A673 (cell line): ENCODE measurements at regions of chr3 and their contacts with region 1.

Region 1: DNA sequence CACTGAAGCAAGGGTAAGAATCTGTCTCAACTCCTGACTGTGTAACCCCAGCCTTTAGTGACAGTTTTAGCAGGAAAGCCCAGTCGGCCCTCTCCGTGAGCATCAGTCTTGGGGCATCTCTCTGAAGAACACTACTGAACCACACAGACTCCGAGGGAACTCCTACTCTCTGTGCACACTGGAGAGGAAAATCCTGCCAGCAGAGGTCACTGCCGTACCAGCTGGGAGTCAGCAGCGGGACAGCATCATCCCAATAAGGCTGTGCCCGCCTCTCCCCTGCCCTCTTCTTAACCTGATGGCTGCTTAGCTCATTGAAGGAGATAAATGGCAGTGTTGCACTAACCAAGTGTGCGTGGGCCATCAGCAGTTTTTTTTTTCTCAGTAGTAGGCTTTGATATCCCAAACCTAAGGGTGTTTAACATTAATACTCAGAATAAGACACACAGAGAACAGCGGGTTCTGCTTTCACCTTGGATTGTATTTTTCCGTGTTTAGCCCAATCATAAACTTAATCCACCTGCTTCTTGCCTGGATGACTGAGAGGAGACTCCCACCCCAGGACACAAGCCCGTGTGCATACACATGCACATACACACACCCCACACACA is 26.6 kb upstream of the RASA2 start:
- DNase-seq: peak; percentile 89
- H3K4me3 ChIP-seq: no peak overlapping the region
- H3K27ac ChIP-seq: no peak overlapping the region
- H3K4me1 ChIP-seq: no peaks in the 10 kb centered on the region
- H3K27me3 ChIP-seq: no peaks in the 10 kb centered on the region
- CTCF ChIP-seq: peak; percentile 85

Region 2: GRCh38 chr3:141644931-141645330 is 184.7 kb after region 1 on chr3:
- CTCF ChIA-PET with region 1: interaction called, 6 read pairs
- POLR2A ChIA-PET with region 1: no interaction called
- intact Hi-C with region 1: loop called (anchors 2 kb)
- DNase-seq: peak; percentile 63
- H3K4me3 ChIP-seq: no peak overlapping the region
- H3K27ac ChIP-seq: no peak overlapping the region
- H3K4me1 ChIP-seq: peaks cover 3% of the 10 kb centered on the region
- H3K27me3 ChIP-seq: no peaks in the 10 kb centered on the region
- CTCF ChIP-seq: peak; percentile 89

Region 3: DNA sequence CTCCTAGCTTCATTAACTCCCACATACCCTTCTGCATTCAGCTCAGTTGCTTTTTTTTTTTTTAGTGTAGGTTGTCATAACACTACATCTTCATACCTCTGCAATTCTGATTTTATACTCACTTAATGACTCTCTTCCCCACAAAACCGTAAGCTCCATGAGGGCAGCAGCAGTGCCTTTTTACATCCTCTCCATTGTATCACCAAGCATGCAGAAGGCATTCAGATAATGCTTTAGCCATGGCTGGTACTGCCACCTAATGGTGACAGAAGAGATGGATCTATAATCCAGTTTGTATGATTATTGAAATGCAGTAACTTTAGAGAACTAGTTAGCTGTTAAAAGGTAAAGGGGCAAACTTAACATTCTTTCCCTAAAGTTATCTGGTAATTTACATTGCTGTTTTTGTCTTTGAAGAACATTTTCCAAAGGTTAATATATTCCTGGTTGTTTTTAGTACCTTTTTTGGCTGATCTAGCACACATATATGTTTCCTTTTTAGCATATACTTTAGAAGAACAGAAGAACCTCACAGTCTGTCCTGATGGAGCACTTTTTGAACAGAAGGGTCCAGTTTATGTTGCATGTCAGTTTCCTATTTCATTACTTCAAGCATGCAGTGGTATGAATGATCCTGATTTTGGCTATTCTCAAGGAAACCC is 453.1 kb after region 1 on chr3:
- CTCF ChIA-PET with region 1: interaction called, 3 read pairs
- POLR2A ChIA-PET with region 1: no interaction called
- intact Hi-C with region 1: loop called (anchors 10 kb)
- DNase-seq: peak; percentile 78
- H3K4me3 ChIP-seq: no peak overlapping the region
- H3K27ac ChIP-seq: no peak overlapping the region
- H3K4me1 ChIP-seq: peaks cover 27% of the 10 kb centered on the region
- H3K27me3 ChIP-seq: no peaks in the 10 kb centered on the region
- CTCF ChIP-seq: peak; percentile 81

Region 4: GRCh38 chr3:142578327-142579223 is 1118.4 kb after region 1 on chr3 and contains the start of gene ATR:
- CTCF ChIA-PET with region 1: no interaction called
- POLR2A ChIA-PET with region 1: no interaction called
- intact Hi-C with region 1: no loop called
- DNase-seq: peak; percentile 98
- H3K4me3 ChIP-seq: peak within 1 kb of the TSS; percentile 93
- H3K27ac ChIP-seq: peak within 1 kb of the TSS; percentile 84
- H3K4me1 ChIP-seq: no peaks in the 10 kb centered on the region
- H3K27me3 ChIP-seq: no peaks in the 10 kb centered on the region
- CTCF ChIP-seq: no peak
- total RNA-seq, gene ATR: 27.5 and 28.3 TPM in 2 replicates